GM10248 (cell line): ENCODE measurements at regions of chr17 and their contacts with region 1.

Region 1: DNA sequence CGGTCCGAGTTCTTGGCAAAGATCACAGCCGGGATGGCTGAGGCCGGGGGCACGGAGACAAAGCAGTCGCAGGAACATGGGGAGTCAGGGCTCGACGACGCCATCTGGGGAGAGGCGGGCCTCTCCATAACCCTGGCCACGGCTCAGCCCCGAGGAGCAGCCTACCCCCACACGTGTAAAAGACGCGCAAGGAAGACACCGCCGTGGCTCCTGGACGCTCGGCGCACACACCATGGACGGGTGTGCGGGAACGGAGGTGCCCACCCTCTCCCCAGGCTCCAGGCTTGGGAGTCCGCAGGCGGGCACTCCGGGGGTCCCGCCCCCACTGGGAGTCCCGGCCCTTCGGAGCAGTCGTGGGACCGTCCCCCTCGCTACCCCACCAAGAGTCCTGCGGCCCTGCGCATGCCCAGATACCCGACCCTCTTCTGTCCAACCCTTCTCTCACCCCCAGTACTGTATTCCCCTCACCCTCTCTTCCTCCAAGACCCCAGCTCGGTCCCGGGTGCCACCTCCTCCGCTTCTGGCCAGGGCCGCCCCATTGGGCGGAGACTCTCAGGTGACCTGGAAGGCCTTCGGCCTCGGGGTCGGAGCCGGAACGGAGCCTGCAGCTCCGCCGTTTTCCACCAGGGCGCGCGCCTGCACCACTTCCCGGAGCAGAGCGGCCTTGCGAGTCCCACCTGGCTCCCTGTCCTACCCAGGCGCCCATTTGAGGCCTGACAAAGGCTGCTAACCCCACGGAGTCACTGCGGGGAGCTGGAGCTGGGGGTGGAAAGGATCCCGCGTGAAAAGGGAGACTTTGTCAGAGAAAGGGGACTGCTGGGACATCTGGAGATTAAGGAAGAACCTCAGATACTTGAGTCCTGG is at the start of gene SCRN2:
- DNase-seq: peak; percentile 93
- CTCF ChIP-seq: peak; percentile 95

Region 2: GRCh38 chr17:47889734-47890529 is 49.0 kb after region 1 on chr17:
- CTCF ChIA-PET with region 1: interaction called, 687 read pairs
- POLR2A ChIA-PET with region 1: no interaction called
- DNase-seq: peak; percentile 81
- CTCF ChIP-seq: peak; percentile 95

Region 3: GRCh38 chr17:47905221-47905781 is 64.3 kb after region 1 on chr17:
- CTCF ChIA-PET with region 1: interaction called, 10 read pairs
- POLR2A ChIA-PET with region 1: interaction called, 3 read pairs
- DNase-seq: no peak
- CTCF ChIP-seq: no peak

Region 4: DNA sequence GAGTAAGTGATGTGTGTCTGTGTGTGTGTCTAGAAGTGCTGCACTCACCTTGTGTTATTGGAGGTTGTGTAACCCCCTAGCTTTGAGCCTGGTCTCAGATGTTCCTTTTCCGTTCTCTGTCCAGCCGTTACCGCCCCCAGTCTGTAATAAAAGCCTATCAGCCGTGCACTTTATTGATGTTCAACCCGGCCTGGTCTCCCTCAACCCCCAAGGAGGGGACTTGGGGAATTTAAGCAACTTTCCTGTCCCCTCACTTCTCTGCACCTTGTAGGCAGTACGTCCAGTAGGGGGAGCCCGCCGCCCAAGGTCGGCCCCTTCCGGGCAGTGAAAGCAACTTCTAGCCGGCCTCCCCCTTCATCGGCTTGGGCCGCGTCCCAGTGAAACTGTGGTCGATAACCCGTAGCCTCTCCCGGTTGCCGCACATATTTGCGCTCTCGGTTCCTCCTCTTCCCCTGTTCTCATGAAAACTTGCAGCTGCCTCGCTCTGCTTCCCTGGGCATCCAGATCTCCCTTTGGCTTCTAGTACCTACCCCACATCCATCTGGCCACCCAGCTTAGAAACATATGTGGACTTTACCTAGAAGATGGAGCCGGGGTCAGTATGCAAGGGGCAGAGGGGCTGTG is 108.3 kb after region 1 on chr17:
- CTCF ChIA-PET with region 1: interaction called, 24 read pairs
- POLR2A ChIA-PET with region 1: no interaction called
- DNase-seq: peak; percentile 82
- CTCF ChIP-seq: peak; percentile 88

Region 5: GRCh38 chr17:48011405-48012150 is 170.6 kb after region 1 on chr17:
- CTCF ChIA-PET with region 1: interaction called, 78 read pairs
- POLR2A ChIA-PET with region 1: interaction called, 3 read pairs
- DNase-seq: peak; percentile 73
- CTCF ChIP-seq: peak; percentile 66